ENCODE measurements at regions of chrX and their contacts with region 1.

Region 1: GRCh38 chrX:95332530-95332929 is 1352.1 kb upstream of the DIAPH2 start:
- DNase-seq: no peak
- CTCF ChIP-seq: no peak

Region 2: DNA sequence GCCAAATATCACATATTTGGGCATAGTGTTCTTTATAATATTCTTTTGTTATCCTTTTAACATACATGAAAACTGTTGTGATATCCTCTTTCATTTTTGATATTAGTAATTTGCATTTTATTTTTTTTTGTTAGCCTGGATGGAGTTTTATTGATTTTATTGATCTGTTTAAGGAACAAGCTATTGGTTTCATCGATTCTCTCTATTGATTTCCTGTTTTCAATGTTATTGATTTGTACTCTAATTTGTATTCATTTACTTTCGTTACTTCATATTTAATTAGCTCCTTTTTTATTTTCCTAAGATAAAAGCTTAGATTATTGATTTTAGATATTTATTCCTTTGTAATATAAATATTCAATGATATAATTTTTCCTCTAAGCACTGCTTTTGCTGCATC is 324.2 kb before region 1 on chrX:
- CTCF ChIA-PET with region 1: no interaction called
- POLR2A ChIA-PET with region 1: no interaction called
- DNase-seq: no peak
- CTCF ChIP-seq: no peak

Region 3: GRCh38 chrX:95318882-95319281 is 13.6 kb before region 1 on chrX:
- CTCF ChIA-PET with region 1: interaction called, 10 read pairs
- POLR2A ChIA-PET with region 1: no interaction called
- DNase-seq: peak; percentile 3
- CTCF ChIP-seq: no peak

Region 4: GRCh38 chrX:95718746-95719145 is 386.2 kb after region 1 on chrX:
- CTCF ChIA-PET with region 1: no interaction called
- POLR2A ChIA-PET with region 1: no interaction called
- DNase-seq: no peak
- CTCF ChIP-seq: no peak

Region 5: GRCh38 chrX:95953564-95953963 is 621.0 kb after region 1 on chrX:
- CTCF ChIA-PET with region 1: no interaction called
- POLR2A ChIA-PET with region 1: no interaction called
- DNase-seq: no peak
- CTCF ChIP-seq: no peak